Sciatic nerve (tissue), 2 donors: ENCODE measurements at regions of chr12 and their contacts with region 1.

Region 1: GRCh38 chr12:128606970-128607369 is 216.8 kb downstream of the SLC15A4 start:
- DNase-seq: no peak
- ATAC-seq: no peak

Region 2: GRCh38 chr12:128649902-128650301 is 42.9 kb after region 1 on chr12:
- intact Hi-C with region 1: loop called (anchors 1 kb)
- DNase-seq: no peak
- ATAC-seq: no peak

Region 3: GRCh38 chr12:128872303-128872702 is 265.3 kb after region 1 on chr12:
- intact Hi-C with region 1: no loop called
- DNase-seq: no peak
- ATAC-seq: no peak